Activated CD4-positive, alpha-beta T cell treated with anti-CD3 and anti-CD28 coated beads, Interleukin-2, amount 10 ng/mL, durations not matched to agents 7 days and 5 days (primary cell): ENCODE measurements at regions of chr3 and their contacts with region 1.

Region 1: GRCh38 chr3:111577794-111578685 is 17.1 kb downstream of the ZBED2 start:
- DNase-seq: no peak
- H3K4me3 Mint-ChIP-seq: no peak overlapping the region
- H3K27ac Mint-ChIP-seq: peak overlapping the region; percentile 0
- H3K4me1 Mint-ChIP-seq: peaks cover 65% of the 10 kb centered on the region
- H3K27me3 Mint-ChIP-seq: no peaks in the 10 kb centered on the region

Region 2: DNA sequence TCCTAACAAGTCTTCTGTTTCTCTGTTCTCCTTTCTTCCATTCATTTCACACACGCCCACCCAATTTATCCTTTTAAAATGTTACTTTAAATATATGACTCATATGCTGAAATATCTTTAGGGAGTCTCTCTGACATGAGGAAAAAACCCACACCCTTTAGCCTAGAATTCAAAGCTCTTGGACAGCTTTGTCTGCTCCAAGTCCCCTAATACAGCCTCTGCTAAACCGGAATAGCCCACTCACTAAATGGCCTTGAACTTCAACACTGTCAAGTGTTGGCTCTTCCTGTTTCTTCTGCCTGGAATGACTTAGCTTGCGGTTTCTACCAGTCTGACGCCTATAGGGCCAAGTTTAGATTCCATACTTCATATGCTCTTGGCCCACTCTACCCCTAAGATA is 39.4 kb before region 1 on chr3:
- CTCF ChIA-PET with region 1: no interaction called
- POLR2A ChIA-PET with region 1: no interaction called
- DNase-seq: no peak
- H3K4me3 Mint-ChIP-seq: peak overlapping the region; percentile 63
- H3K27ac Mint-ChIP-seq: peak overlapping the region; percentile 99
- H3K4me1 Mint-ChIP-seq: peaks cover 49% of the 10 kb centered on the region
- H3K27me3 Mint-ChIP-seq: no peaks in the 10 kb centered on the region

Region 3: DNA sequence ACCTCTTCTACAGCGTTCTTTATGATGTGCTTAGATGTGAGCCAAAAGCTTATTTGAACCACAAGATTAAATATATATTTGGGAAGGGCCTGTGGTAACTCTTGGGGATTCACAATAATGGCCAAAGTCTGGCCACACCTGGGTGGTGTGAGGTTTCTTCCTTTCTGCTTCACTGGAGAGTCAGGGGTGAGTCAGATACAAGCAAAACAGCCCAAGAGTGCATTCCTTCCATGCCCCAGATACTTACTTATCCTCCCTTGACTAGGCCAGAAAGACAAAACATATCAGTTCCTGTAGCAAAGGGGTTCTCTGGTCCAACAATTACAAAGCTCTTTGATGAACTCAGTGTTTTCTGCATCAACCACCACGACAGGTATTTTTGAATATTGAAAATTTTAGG is 16.2 kb after region 1 on chr3:
- CTCF ChIA-PET with region 1: interaction called, 13 read pairs
- POLR2A ChIA-PET with region 1: no interaction called
- DNase-seq: no peak
- H3K4me3 Mint-ChIP-seq: peak overlapping the region; percentile 28
- H3K27ac Mint-ChIP-seq: peak overlapping the region; percentile 73
- H3K4me1 Mint-ChIP-seq: peaks cover 68% of the 10 kb centered on the region
- H3K27me3 Mint-ChIP-seq: no peaks in the 10 kb centered on the region

Region 4: DNA sequence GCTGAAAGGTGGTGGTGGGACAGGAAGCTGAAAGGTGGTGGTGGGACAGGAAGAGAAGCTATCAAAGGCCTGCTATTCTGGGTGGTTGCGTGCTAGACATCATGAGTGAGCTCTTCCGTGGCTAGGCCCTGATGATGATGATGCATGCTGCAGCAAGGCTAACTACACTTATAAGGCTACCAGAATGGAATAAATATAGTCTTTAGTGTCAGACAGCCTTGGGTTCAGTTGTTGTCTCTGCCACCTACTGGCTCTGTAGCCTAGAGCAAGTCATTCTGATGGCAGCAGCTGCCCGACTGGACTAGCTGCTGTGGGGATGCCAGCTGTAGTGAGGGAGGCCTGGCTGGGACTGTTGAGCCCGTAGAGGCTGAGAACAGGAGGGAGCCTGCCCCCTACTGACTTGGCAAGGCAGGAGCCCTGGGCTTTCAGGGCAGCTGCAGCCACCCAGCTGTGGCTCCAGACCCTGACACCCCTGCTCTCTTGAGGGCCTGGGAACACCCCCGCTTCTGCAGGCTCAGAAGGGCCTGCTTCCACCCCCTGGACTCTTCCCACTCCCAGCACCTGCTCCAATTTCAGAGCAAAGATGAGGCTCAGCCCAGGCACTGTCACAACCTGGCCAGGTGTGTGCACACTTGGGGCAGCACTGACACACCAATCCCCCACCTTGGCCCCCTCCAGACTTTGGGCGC is 38.5 kb after region 1 on chr3:
- CTCF ChIA-PET with region 1: interaction called, 23 read pairs
- POLR2A ChIA-PET with region 1: interaction called, 3 read pairs
- DNase-seq: peak; percentile 67
- H3K4me3 Mint-ChIP-seq: no peak overlapping the region
- H3K27ac Mint-ChIP-seq: peak overlapping the region; percentile 90
- H3K4me1 Mint-ChIP-seq: peaks cover 69% of the 10 kb centered on the region
- H3K27me3 Mint-ChIP-seq: no peaks in the 10 kb centered on the region

Region 5: DNA sequence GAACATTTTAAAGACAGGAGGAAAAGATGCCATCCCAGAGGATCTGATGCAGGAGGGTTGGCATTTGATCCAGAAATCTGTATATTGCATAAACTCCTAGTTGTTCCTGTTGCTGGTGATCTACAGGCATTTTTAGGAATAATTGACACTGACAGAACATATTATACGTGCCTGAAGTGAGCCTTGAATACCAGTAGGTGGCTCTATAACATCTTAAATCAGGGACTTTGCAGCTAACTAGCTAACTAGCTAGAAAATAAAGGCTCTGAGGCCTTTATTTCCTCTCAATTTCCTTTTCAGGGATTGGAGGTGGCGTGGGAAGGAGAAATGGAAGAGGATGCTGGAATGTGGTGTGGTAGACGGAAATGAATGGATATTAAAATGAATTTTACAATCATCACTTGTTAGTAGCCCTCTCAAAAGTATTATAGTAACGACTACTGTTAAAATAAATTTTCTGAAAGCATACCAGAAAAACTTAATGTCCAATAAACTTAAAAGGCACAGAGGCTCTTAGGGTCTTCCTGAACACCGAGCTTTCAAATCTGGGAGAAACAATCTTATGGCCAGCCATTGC is 91.0 kb after region 1 on chr3:
- CTCF ChIA-PET with region 1: interaction called, 13 read pairs
- POLR2A ChIA-PET with region 1: no interaction called
- DNase-seq: no peak
- H3K4me3 Mint-ChIP-seq: no peak overlapping the region
- H3K27ac Mint-ChIP-seq: peak overlapping the region; percentile 76
- H3K4me1 Mint-ChIP-seq: peaks cover 82% of the 10 kb centered on the region
- H3K27me3 Mint-ChIP-seq: no peaks in the 10 kb centered on the region

Region 6: DNA sequence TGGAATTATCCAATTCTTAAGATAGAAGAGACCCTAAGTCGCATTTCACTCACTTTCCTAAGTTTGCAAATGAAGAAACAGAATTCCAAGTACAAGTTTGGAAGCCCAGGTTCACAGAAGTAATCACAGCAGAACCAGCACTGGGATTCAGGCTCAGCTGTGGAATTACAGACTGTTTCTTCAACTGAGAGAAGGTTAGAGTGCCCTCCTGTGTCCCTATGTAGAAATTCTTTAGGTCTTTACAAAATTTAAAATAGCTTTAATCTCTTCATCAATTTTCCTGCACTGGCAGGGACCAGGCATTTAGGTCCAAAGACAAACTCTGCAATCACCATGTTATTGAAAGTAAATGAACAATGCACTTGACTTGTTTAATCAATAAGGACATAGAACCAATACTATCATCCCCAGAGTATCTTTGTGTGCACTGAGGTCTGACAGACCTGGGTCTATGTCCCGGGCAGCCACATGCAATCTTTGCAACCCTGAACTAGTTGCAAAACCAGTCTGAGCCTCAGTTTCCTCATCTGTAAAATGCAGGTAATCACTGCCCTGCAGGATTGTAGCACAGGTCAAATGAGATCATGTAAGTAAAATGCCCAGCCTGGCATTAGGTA is 113.4 kb after region 1 on chr3:
- CTCF ChIA-PET with region 1: interaction called, 16 read pairs
- POLR2A ChIA-PET with region 1: no interaction called
- DNase-seq: no peak
- H3K4me3 Mint-ChIP-seq: no peak overlapping the region
- H3K27ac Mint-ChIP-seq: no peak overlapping the region
- H3K4me1 Mint-ChIP-seq: peaks cover 58% of the 10 kb centered on the region
- H3K27me3 Mint-ChIP-seq: no peaks in the 10 kb centered on the region

Region 7: DNA sequence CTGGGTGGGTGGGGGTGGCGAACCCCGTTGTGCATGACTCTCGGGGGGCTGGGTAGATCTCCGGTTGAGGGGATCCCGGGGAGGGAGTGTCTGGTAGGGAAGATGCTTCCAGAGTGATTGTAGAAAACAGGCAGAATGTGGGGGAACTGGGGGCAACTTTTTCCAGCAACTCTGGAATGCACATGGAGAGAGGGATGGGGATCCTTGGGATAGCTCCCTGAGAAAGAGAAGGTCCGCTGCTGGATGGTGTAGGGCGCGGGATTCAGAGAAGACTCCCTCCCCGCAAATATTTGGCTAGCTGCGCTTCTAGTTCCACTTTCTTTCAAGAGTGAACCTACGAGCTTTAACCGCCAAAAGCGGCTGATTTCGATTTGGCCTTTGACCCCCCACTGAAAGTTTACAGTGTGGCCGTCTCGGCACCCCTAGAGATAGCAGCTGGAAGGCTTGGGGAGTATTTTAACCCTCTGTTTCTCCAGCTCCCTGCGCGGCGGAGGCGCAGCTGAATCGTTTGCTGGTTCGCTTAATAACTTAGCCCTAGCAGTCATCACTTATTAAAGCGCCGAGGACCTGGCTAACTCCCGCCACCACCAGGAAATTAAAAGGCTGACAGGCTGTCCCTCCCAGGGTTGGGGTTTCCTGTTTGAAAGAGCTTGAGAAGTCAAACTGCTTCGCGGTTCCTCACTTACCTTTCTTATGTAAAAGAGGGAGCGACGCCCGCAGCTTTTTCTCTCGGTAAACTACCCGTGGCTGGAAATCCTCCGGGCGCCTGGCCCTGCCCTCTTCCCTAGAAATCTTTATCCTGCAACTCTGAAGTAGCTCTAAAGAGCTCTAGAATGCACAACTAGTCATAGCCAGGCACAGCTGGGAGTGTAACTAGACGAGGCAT is 282.2 kb after region 1 on chr3:
- CTCF ChIA-PET with region 1: no interaction called
- POLR2A ChIA-PET with region 1: no interaction called
- DNase-seq: peak; percentile 60
- H3K4me3 Mint-ChIP-seq: peak overlapping the region; percentile 79
- H3K27ac Mint-ChIP-seq: peak overlapping the region; percentile 71
- H3K4me1 Mint-ChIP-seq: peaks cover 17% of the 10 kb centered on the region
- H3K27me3 Mint-ChIP-seq: peaks cover 62% of the 10 kb centered on the region